ENCODE measurements at regions of chr7 and their contacts with region 1.

Region 1: DNA sequence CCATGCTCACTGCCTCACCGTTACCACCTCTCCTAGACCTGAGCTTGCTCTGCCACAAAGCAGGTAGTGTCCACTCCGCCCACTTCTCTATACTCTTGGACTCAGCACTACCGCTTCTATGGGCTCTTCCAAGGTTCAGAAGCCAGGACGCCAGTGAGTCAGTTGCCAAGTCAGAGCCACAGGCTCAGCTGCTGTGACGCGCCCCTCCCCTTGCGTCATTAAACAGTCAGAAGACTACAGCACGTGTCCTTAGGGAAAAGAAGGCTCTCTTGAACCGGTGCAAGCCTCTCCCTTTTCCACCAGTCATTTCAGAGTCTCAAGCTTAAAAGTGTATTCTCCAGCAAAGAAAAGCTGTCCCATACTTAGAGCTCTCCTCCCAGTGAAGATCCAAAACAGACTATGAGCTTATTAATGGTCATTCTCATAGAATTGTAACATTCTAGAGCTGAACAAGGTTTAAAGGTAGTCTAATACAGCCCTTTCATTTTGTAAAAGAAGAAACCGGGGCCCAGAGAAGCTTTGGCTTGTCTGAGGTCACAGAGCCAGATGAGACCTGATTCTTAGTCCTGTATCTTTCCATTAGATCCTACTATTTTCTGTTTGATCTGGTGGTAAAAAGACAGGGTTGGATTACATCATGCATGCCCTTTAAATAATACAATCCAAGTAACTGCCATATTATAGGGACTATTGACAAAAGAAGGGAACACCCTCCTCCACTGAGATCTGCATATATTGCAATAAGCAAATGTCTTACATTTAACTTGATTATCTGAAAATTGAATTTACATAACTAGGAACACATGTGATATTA is 40.9 kb upstream of the MET start:
- DNase-seq: peak; percentile 91 to 97
- ATAC-seq: peak; percentile 82 to 89
- H3K4me3 ChIP-seq: peak overlapping the region in 1 of 4 donors; percentile 10
- H3K27ac ChIP-seq: peak overlapping the region; percentile 81 to 92 (median 90)
- H3K4me1 ChIP-seq: peaks cover 58 to 62% of the 10 kb centered on the region in 2 donors
- H3K27me3 ChIP-seq: no peaks in the 10 kb centered on the region
- CTCF ChIP-seq: no peak
- POLR2A ChIP-seq: peak; percentile 79 to 87

Region 2: DNA sequence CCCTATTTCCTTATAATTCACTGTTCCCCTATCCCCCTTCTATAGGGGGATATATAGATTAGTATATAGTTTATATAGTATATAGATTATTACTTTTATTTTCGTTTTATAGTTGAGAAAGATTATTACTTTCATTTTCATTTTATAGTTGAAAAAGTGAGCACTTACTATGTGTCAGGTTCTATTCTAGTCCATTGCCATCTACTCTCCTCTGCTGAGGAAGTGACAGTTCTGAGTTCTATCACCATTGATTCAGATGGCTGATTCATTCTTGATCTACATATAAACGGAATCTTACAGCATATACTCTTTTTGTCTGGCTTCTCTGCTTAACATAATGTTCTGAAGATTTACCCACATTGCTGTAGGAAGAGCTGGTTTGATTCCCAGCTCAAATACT is 152.3 kb before region 1 on chr7:
- in situ Hi-C with region 1: no loop called
- intact Hi-C with region 1: no loop called
- DNase-seq: no peak
- ATAC-seq: no peak
- H3K4me3 ChIP-seq: no peak overlapping the region
- H3K27ac ChIP-seq: no peak overlapping the region
- H3K4me1 ChIP-seq: no peaks in the 10 kb centered on the region
- H3K27me3 ChIP-seq: no peaks in the 10 kb centered on the region
- CTCF ChIP-seq: no peak
- POLR2A ChIP-seq: no peak

Region 3: DNA sequence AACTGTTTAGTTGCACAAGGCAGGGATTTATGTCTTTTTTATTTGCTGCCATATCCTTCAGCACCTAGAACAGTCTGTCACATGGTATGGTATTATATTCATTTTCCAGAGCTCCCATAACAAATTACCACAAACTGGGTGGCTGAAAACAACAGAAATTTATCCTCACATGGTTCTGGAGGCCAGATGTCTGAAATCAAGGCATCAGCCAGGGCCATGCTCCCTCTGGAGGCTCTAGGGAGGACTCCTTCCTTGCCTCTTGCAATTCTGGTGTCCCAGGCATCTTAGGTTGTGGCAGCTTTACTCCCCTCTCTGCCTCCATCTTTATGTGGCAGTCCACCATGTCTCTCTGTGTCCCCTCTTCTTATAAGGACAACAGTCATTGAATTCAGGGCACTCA is 83.9 kb after region 1 on chr7:
- in situ Hi-C with region 1: no loop called
- intact Hi-C with region 1: loop called (anchors 5 kb)
- DNase-seq: no peak
- ATAC-seq: no peak
- H3K4me3 ChIP-seq: no peak overlapping the region
- H3K27ac ChIP-seq: peak overlapping the region in 3 of 4 donors; percentile 65 to 82 (median 79)
- H3K4me1 ChIP-seq: peaks cover 20 to 24% of the 10 kb centered on the region in 2 donors
- H3K27me3 ChIP-seq: no peaks in the 10 kb centered on the region
- CTCF ChIP-seq: no peak
- POLR2A ChIP-seq: no peak

Region 4: DNA sequence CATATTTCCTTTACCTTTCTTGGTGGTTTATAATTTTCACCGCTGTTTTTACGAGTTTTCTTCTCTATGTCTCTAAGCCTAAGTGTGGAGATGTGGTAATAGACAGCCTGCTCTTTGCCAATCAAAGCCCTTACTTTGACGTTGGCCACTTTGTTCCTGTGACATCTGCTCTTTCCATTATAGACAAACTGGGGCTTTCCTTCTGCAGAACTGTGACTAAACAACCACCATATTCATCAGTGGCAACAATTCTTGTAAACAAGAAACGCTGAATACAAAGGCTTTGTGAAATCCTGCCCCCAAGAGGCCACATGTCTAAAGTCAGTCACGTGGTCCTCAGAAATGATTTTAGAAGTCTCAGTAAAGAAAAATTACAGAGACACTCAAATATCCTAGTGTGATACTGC is 171.6 kb after region 1 on chr7:
- in situ Hi-C with region 1: no loop called
- intact Hi-C with region 1: loop called (anchors 1 kb)
- DNase-seq: peak; percentile 28 to 37
- ATAC-seq: peak; percentile 18 to 27
- H3K4me3 ChIP-seq: no peak overlapping the region
- H3K27ac ChIP-seq: peak overlapping the region; percentile 81 to 93 (median 88)
- H3K4me1 ChIP-seq: peaks cover 45 to 52% of the 10 kb centered on the region in 2 donors
- H3K27me3 ChIP-seq: no peaks in the 10 kb centered on the region
- CTCF ChIP-seq: peak; percentile 18 to 32 (median 31)
- POLR2A ChIP-seq: no peak

Region 5: DNA sequence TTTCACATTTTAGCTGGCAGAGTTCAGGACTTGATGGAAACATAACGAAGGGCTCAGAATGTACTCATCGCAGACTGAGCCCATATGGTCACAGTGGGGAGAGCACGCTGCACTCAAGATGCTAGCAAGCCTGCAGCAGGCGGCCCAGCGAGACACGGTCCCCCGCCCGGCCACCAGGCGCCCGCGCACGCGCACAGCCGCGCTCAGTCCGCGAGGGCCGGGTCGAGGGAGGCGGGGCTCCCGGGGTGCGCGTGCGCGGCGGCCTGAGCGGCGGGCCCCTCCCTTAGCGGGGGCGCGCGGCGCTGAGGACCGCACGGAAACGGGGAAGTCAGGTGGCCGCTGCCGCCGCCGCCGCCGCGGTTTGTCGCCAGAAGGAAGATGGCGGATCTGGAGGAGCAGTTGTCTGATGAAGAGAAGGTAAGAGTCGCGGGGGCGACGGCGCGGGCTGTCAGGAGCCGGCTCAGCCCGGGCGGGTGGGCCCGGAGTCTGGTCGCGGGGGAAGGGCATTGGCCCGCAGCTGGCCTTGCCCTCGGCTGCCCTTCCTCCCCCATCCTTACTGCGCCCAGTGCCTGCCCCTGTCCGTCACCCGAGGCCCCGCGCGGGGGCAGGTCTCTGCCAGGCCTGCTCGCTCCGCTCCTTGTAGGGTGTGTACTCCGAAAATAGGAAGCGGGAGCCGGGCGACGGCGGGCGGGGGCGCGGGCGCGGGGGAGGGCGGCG is 231.3 kb after region 1 on chr7 and contains the start of gene CAPZA2:
- in situ Hi-C with region 1: no loop called
- intact Hi-C with region 1: loop called (anchors 2 kb)
- DNase-seq: peak; percentile 82 to 90
- ATAC-seq: peak; percentile 93
- H3K4me3 ChIP-seq: peak within 1 kb of the TSS; percentile 67 to 94 (median 82)
- H3K27ac ChIP-seq: peak within 1 kb of the TSS; percentile 92 to 99 (median 96)
- H3K4me1 ChIP-seq: peaks cover 29 to 38% of the 10 kb centered on the region in 2 donors
- H3K27me3 ChIP-seq: no peaks in the 10 kb centered on the region
- CTCF ChIP-seq: peak; percentile 52 to 94 (median 82)
- POLR2A ChIP-seq: peak; percentile 83 to 90
- total RNA-seq, gene CAPZA2: 110 to 158 (median 137) TPM

Region 6: DNA sequence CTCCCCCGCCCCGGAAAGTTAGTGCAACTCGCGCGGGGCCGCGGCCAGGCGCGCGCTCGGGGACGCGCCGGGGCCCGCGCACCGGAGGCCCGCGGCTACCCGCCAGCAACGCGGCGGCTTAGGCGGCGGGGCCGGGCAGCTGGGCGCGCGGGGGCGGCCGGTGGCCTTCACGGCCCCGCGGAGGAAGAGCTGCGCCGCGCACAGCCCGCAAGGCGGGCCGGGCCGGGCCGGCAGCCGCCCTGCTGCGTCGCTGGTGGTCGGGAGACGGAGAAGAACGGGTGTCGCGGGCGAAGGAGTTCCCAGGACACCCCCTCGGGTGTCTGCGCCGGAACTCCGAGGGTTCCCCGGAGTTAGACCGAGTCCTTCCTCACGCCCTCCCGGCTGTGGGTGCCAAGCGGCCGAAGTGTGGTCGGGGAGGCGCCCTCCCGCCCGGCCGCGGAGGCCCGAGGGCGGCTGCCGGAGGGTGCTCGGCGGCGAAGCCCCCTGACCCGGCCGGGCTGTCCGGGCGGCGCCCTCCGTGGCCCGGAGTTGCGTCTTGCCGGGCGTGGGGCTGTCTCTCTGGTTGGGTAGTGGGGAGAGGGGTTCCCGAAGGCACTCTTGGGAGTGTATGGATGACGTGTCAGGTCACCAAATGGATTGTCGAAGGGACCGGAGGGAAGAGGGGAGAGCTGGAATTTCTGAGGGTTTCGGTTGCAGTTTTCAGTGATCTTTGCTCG is 322.7 kb after region 1 on chr7:
- in situ Hi-C with region 1: no loop called
- intact Hi-C with region 1: loop called (anchors 5 kb)
- DNase-seq: peak; percentile 43 to 62
- ATAC-seq: peak; percentile 82 to 86
- H3K4me3 ChIP-seq: peak overlapping the region; percentile 74 to 88 (median 83)
- H3K27ac ChIP-seq: peak overlapping the region; percentile 94 to 98 (median 96)
- H3K4me1 ChIP-seq: peaks cover 29 to 33% of the 10 kb centered on the region in 2 donors
- H3K27me3 ChIP-seq: no peaks in the 10 kb centered on the region
- CTCF ChIP-seq: no peak
- POLR2A ChIP-seq: peak; percentile 68 to 79

Region 7: DNA sequence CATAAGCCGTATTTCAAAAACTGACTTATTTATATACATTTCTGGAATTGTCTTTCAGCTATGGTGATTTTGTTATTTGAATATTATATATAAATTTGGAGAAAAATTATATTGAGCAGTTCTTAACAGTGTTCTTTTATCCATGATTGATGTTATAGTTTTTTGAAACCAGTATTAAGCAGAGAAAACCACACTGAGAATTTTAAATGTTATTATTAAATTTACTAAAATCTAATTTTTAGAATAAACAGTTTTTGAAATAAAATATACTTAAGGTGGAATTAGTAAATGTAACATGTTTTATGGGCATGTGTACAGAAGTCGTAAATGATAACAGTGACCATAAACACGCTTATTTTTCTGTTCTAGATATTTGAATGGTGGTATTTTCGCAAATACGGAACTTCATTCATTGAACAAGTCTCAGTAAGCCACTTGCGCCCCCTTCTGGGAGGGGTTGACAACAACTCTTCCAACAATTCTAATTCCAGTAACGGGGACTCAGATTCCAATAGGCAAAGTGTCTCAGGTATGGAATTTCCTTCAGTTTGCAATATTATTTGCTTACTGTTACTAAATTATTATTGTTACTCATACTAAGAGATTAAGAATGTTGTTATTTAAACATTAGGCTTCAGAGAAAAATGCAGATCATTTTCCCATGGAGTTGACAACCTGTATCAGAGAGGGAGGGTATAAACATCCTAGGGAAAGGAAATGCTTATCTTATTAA is 488.2 kb after region 1 on chr7:
- in situ Hi-C with region 1: loop called in 1 of 4 experiments (anchors 25 kb)
- intact Hi-C with region 1: no loop called
- DNase-seq: peak; percentile 43 to 67
- ATAC-seq: peak in 1 of 2 donors; percentile 65
- H3K4me3 ChIP-seq: no peak overlapping the region
- H3K27ac ChIP-seq: no peak overlapping the region
- H3K4me1 ChIP-seq: peaks cover 8 to 23% of the 10 kb centered on the region in 2 donors
- H3K27me3 ChIP-seq: no peaks in the 10 kb centered on the region
- CTCF ChIP-seq: peak; percentile 75 to 90 (median 81)
- POLR2A ChIP-seq: no peak

Region 8: DNA sequence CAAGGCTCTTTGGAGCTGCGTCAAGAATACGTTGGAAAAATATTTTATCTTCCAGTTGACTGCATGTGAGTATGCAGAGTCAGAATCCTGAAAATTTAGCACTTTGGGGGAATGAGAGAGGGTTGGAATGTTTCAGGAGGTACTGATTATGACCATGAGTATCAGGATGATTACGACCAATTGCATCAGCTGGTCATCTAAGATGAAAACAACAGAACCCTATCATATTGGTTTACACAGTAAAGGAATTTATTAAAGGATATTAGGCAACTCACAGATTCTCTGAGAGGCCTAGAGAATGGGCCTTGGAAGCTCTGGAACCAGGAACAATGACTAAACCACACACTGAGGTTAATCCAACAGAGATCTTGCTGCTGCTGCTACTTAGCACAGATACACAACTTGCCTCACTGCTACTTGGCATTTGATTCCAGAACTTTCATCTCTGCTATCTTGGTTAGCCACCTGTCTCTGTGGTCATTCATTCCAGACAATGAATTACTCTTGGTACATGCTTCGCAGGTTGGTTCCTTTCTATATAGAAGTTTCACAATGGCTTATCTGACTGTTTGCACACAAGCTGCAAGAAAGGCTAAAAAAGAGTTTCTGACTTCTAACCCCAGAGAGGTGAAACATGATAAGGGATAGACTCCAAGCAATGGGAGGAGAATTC is 1310.1 kb after region 1 on chr7:
- in situ Hi-C with region 1: no loop called
- intact Hi-C with region 1: no loop called
- DNase-seq: no peak
- ATAC-seq: no peak
- H3K4me3 ChIP-seq: no peak overlapping the region
- H3K27ac ChIP-seq: no peak overlapping the region
- H3K4me1 ChIP-seq: no peaks in the 10 kb centered on the region
- H3K27me3 ChIP-seq: no peaks in the 10 kb centered on the region
- CTCF ChIP-seq: no peak
- POLR2A ChIP-seq: no peak

Measured in gastrocnemius medialis (tissue), 4 donors.